ENCODE measurements at regions of chrX and their contacts with region 1.

Region 1: GRCh38 chrX:145190801-145191389 is 56.4 kb upstream of the SPANXN1 start:
- DNase-seq: no peak
- H3K4me3 ChIP-seq: no peak overlapping the region
- H3K27ac ChIP-seq: no peak overlapping the region
- H3K4me1 ChIP-seq: no peaks in the 10 kb centered on the region
- H3K27me3 ChIP-seq: no peaks in the 10 kb centered on the region
- CTCF ChIP-seq: no peak
- POLR2A ChIP-seq: no peak

Region 2: GRCh38 chrX:143664302-143664701 is 1526.6 kb before region 1 on chrX:
- CTCF ChIA-PET with region 1: no interaction called
- POLR2A ChIA-PET with region 1: no interaction called
- dilution Hi-C with region 1: no loop called
- intact Hi-C with region 1: loop called (anchors 10 kb)
- DNase-seq: no peak
- H3K4me3 ChIP-seq: no peak overlapping the region
- H3K27ac ChIP-seq: no peak overlapping the region
- H3K4me1 ChIP-seq: no peaks in the 10 kb centered on the region
- H3K27me3 ChIP-seq: no peaks in the 10 kb centered on the region
- CTCF ChIP-seq: no peak
- POLR2A ChIP-seq: no peak

Region 3: GRCh38 chrX:144946666-144947065 is 244.2 kb before region 1 on chrX:
- CTCF ChIA-PET with region 1: no interaction called
- POLR2A ChIA-PET with region 1: no interaction called
- dilution Hi-C with region 1: no loop called
- intact Hi-C with region 1: no loop called
- DNase-seq: no peak
- H3K4me3 ChIP-seq: no peak overlapping the region
- H3K27ac ChIP-seq: no peak overlapping the region
- H3K4me1 ChIP-seq: no peaks in the 10 kb centered on the region
- H3K27me3 ChIP-seq: no peaks in the 10 kb centered on the region
- CTCF ChIP-seq: no peak
- POLR2A ChIP-seq: no peak

Measured in endothelial cell of umbilical vein (primary cell).